CD8-positive, alpha-beta memory T cell (primary cell): ENCODE measurements at regions of chr13 and their contacts with region 1.

Region 1: GRCh38 chr13:99200432-99201167 is at the start of gene UBAC2:
- DNase-seq: peak; percentile 95 to 99 (median 98)
- H3K4me3 ChIP-seq: peak within 1 kb of the TSS; percentile 84
- H3K4me3 Mint-ChIP-seq: peak within 1 kb of the TSS; percentile 89 to 98 (median 95)
- H3K27ac ChIP-seq: peak within 1 kb of the TSS; percentile 95
- H3K27ac Mint-ChIP-seq: peak within 1 kb of the TSS; percentile 80 to 100 (median 98)
- H3K4me1 ChIP-seq: peaks cover 46% of the 10 kb centered on the region
- H3K4me1 Mint-ChIP-seq: peaks cover 54 to 71% (median 66%) of the 10 kb centered on the region in 3 donors
- H3K27me3 ChIP-seq: no peaks in the 10 kb centered on the region
- H3K27me3 Mint-ChIP-seq: peaks cover 0 to 4% of the 10 kb centered on the region in 2 donors
- total RNA-seq, gene UBAC2: 62.3 to 63.7 TPM

Region 2: GRCh38 chr13:99214232-99214631 is 13.6 kb after region 1 on chr13:
- CTCF ChIA-PET with region 1: interaction called, 60 read pairs
- POLR2A ChIA-PET with region 1: interaction called, 102 read pairs
- DNase-seq: peak in 1 of 5 donors; percentile 63
- H3K4me3 ChIP-seq: peak overlapping the region; percentile 34
- H3K4me3 Mint-ChIP-seq: peak overlapping the region; percentile 35 to 98 (median 94)
- H3K27ac ChIP-seq: no peak overlapping the region
- H3K27ac Mint-ChIP-seq: peak overlapping the region; percentile 97 to 100 (median 98)
- H3K4me1 ChIP-seq: peaks cover 81% of the 10 kb centered on the region
- H3K4me1 Mint-ChIP-seq: peaks cover 68 to 90% (median 87%) of the 10 kb centered on the region in 3 donors
- H3K27me3 ChIP-seq: no peaks in the 10 kb centered on the region
- H3K27me3 Mint-ChIP-seq: no peaks in the 10 kb centered on the region

Region 3: DNA sequence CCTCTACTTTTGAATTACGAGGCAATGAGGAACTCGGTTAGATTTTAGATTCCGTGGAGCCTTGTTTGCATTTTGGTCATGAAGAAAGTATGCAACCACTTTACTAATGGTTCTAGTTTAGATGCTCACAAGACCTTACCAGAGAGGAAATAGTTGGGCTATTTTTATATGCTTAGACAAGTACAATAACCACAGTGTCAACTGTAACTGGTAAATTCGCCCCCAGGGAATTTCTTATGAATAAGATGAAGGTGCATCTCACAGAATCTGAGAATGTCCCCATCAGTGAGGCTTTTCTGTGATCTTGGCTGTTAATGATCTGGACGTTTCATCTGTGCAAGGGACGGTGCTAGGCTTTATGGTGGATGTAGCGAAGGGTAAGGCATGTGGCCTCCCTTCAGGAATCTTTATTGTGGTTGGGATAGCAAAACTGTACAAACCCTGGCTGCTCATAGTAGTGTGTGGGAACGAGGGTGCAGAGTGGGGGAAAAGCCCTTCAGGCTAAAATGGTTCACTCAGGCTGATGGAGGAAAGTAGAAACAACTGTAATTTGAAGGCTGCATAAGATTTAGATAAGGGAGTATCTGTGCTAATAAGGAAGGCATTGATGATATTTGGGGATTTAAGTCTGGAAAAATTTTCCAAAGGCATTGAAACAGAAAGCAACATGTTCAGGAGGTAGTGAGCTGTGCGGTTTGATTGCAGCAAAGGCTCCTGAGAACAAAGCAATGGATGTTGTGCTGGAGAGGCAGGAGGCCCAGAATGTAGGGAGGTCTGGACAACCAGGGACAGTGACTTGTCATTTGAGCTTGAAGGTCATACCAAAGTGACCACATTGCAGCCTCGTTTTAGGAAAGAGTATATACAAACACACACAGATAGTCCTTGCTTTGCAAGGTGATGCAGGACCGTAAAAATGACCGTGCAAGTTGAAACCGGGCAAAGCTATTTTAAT is 28.4 kb after region 1 on chr13:
- CTCF ChIA-PET with region 1: interaction called, 49 read pairs
- POLR2A ChIA-PET with region 1: interaction called, 21 read pairs
- DNase-seq: peak in 1 of 5 donors; percentile 42
- H3K4me3 ChIP-seq: peak overlapping the region; percentile 23
- H3K4me3 Mint-ChIP-seq: peak overlapping the region; percentile 71 to 91 (median 80)
- H3K27ac ChIP-seq: no peak overlapping the region
- H3K27ac Mint-ChIP-seq: peak overlapping the region; percentile 83 to 97 (median 93)
- H3K4me1 ChIP-seq: peaks cover 77% of the 10 kb centered on the region
- H3K4me1 Mint-ChIP-seq: peaks cover 74 to 92% (median 86%) of the 10 kb centered on the region in 3 donors
- H3K27me3 ChIP-seq: no peaks in the 10 kb centered on the region
- H3K27me3 Mint-ChIP-seq: no peaks in the 10 kb centered on the region

Region 4: GRCh38 chr13:99237981-99238662 is 37.5 kb after region 1 on chr13:
- CTCF ChIA-PET with region 1: interaction called, 49 read pairs
- POLR2A ChIA-PET with region 1: interaction called, 21 read pairs
- DNase-seq: peak in 2 of 5 donors; percentile 42 to 55
- H3K4me3 ChIP-seq: peak overlapping the region; percentile 50
- H3K4me3 Mint-ChIP-seq: peak overlapping the region; percentile 80 to 88 (median 83)
- H3K27ac ChIP-seq: peak overlapping the region; percentile 33
- H3K27ac Mint-ChIP-seq: peak overlapping the region; percentile 90 to 98 (median 96)
- H3K4me1 ChIP-seq: peaks cover 19% of the 10 kb centered on the region
- H3K4me1 Mint-ChIP-seq: peaks cover 55 to 77% (median 74%) of the 10 kb centered on the region in 3 donors
- H3K27me3 ChIP-seq: no peaks in the 10 kb centered on the region
- H3K27me3 Mint-ChIP-seq: no peaks in the 10 kb centered on the region

Region 5: DNA sequence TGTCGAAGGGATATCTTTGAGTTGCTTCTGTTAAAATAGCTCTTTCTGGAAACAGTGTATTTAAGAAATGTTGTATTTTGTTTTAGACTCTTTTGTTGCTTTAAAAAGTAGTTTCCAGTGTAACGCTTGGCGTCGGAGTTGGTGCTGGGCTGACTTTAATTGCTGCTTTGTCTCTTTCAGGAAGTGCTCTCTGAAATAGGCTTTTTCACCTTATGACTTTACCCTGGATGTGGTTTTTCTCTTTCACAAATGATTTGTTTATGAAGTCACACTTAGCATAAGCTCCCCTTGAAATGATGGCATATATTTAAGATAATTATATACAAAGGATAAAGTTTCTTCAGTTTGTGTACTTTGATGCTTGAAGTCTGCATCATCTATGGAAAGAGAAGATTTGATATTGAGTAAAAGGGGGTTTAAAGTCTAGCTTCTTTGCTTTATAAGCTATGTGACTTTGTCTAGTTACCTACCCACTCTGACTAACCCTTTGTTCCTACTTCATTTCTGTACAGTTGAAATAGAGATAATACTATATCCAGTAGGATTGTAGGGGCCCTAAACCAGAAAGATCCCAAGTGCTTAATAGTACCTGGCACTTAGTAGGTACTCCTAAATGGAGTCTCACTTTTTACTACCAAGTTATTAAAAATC is 57.7 kb after region 1 on chr13 and contains the start of gene GPR18:
- CTCF ChIA-PET with region 1: interaction called, 223 read pairs
- POLR2A ChIA-PET with region 1: interaction called, 55 read pairs
- DNase-seq: peak in 4 of 5 donors; percentile 16 to 73 (median 58)
- H3K4me3 ChIP-seq: peak within 1 kb of the TSS; percentile 74
- H3K4me3 Mint-ChIP-seq: peak within 1 kb of the TSS; percentile 91 to 98 (median 96)
- H3K27ac ChIP-seq: peak within 1 kb of the TSS; percentile 39
- H3K27ac Mint-ChIP-seq: peak within 1 kb of the TSS; percentile 89 to 99 (median 96)
- H3K4me1 ChIP-seq: peaks cover 63% of the 10 kb centered on the region
- H3K4me1 Mint-ChIP-seq: peaks cover 65 to 83% (median 78%) of the 10 kb centered on the region in 3 donors
- H3K27me3 ChIP-seq: no peaks in the 10 kb centered on the region
- H3K27me3 Mint-ChIP-seq: no peaks in the 10 kb centered on the region
- total RNA-seq, gene GPR18: 15.2 to 16.2 TPM

Region 6: DNA sequence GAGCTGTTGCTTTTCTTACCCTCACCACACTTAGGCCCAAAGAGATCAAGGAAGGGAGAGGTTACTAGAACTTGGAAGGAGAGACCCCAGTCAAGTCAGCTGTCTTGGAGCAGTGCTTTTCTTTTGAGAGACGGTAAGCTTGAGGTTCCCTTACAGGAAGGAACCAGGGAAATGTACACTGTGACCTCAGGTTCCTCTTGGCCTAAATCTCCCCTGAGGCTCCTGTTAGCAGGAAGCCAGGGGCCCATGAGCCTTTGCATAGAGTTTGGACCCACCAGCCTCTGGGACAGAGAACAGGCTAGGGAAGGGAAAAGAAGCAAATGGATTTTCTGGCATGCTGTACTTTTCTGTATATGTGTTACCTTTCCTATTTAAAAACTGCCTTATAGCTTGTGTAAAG is 63.5 kb after region 1 on chr13:
- CTCF ChIA-PET with region 1: interaction called, 223 read pairs
- POLR2A ChIA-PET with region 1: interaction called, 14 read pairs
- DNase-seq: no peak
- H3K4me3 ChIP-seq: no peak overlapping the region
- H3K4me3 Mint-ChIP-seq: peak overlapping the region in 6 of 7 donors; percentile 5 to 52 (median 26)
- H3K27ac ChIP-seq: no peak overlapping the region
- H3K27ac Mint-ChIP-seq: peak overlapping the region; percentile 34 to 96 (median 86)
- H3K4me1 ChIP-seq: peaks cover 52% of the 10 kb centered on the region
- H3K4me1 Mint-ChIP-seq: peaks cover 61 to 73% (median 65%) of the 10 kb centered on the region in 3 donors
- H3K27me3 ChIP-seq: no peaks in the 10 kb centered on the region
- H3K27me3 Mint-ChIP-seq: no peaks in the 10 kb centered on the region